Cardiac septum (tissue), 1 donor: ENCODE measurements at regions of chr15 and their contacts with region 1.

Region 1: GRCh38 chr15:71730277-71731144 is 79.8 kb upstream of the NR2E3 start:
- DNase-seq: no peak

Region 2: GRCh38 chr15:71575474-71576045 is 155.0 kb before region 1 on chr15:
- intact Hi-C with region 1: loop called (anchors 2 kb)
- DNase-seq: no peak

Region 3: GRCh38 chr15:71627604-71628003 is 102.9 kb before region 1 on chr15:
- intact Hi-C with region 1: no loop called
- DNase-seq: no peak

Region 4: DNA sequence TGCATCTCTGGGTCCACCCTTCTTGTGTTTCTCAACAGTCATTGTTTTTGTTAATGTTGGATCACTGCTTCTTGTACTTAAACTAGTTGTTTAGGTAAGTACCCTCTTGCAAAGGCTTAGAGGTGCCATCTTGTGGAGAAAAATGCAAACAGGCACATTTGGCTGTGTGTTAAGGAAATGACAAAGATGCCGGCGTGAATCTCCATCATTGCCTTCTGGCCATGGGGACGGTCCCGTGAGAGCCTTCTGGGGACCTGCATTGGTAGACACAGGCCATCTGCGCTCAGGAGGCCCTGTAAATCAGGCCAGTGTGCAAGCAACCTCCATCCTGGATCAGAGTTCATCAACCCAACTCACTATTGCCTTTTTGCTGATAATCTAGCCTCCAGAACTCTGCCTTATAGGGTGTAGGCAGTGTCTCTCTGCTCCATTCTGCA is 78.7 kb before region 1 on chr15:
- intact Hi-C with region 1: loop called (anchors 5 kb)
- DNase-seq: no peak